Vagina (tissue), 2 donors: ENCODE measurements at regions of chr2 and their contacts with region 1.

Region 1: DNA sequence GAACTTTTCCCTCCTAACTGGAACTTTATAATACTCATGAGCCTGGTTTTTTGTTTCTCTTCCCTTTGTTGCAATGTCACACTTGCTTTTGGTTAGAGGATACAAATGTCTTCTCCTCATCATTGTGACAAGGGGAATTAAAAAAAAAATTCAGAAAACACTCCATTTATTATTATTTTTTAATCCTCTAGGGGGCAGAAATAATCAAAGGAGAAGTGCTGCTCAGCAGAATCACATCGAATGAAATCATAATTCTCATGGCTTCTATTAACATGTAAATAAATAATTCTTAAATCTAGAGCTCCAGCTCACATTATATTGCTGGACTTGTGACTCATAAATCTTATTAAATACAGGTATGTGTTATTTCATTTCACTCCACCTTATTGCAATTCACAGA is 273.8 kb downstream of the TRIB2 start:
- DNase-seq: no peak
- H3K4me3 ChIP-seq: no peak overlapping the region
- H3K27ac ChIP-seq: no peak overlapping the region
- H3K4me1 ChIP-seq: no peaks in the 10 kb centered on the region
- H3K27me3 ChIP-seq: no peaks in the 10 kb centered on the region
- CTCF ChIP-seq: no peak
- POLR2A ChIP-seq: no peak

Region 2: GRCh38 chr2:12402440-12403139 is 587.9 kb before region 1 on chr2:
- intact Hi-C with region 1: loop called (anchors 10 kb)
- DNase-seq: no peak
- H3K4me3 ChIP-seq: no peak overlapping the region
- H3K27ac ChIP-seq: no peak overlapping the region
- H3K4me1 ChIP-seq: no peaks in the 10 kb centered on the region
- H3K27me3 ChIP-seq: no peaks in the 10 kb centered on the region
- CTCF ChIP-seq: no peak
- POLR2A ChIP-seq: no peak

Region 3: DNA sequence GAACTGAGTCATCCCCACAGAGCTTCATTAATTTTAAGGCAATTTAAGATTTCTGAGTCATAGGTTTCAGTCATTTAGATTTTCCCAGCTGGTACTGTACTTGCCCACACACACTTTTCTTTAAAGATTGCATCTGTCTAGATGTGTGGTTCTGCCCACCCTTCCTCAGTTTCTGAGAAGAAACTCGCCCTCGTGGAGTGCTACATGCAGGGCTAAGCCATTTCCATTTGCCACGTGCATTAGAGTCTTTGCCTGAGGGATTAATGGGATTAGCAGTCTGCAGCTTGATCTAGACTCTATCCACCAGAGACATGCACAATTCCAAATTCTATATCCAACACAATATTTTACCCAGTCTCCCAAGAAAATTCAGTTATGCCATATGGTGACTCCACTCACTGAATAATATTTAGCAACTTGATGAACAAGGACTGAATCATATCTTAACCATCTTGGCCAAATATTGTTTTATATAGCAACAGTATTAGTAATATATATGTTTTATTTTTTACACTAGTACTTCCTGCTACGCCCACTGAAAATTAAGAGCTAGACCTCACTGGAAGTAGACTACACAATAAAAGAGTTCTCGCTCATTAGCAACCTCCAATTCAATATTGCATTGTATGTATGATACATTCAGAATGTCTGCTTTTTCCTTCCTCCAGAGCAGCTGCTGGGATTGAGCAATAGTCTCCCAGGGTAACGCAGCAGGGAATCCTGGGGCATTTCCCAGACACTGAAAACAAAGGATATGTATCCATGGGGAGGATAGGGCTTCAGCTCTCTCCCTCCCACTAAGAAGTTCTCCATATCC is 288.0 kb before region 1 on chr2:
- intact Hi-C with region 1: no loop called
- DNase-seq: no peak
- H3K4me3 ChIP-seq: no peak overlapping the region
- H3K27ac ChIP-seq: no peak overlapping the region
- H3K4me1 ChIP-seq: peaks cover 36% of the 10 kb centered on the region
- H3K27me3 ChIP-seq: no peaks in the 10 kb centered on the region
- CTCF ChIP-seq: no peak
- POLR2A ChIP-seq: no peak

Region 4: GRCh38 chr2:12807907-12808810 is 182.4 kb before region 1 on chr2:
- intact Hi-C with region 1: no loop called
- DNase-seq: no peak
- H3K4me3 ChIP-seq: no peak overlapping the region
- H3K27ac ChIP-seq: no peak overlapping the region
- H3K4me1 ChIP-seq: no peaks in the 10 kb centered on the region
- H3K27me3 ChIP-seq: no peaks in the 10 kb centered on the region
- CTCF ChIP-seq: no peak
- POLR2A ChIP-seq: no peak

Region 5: GRCh38 chr2:13091455-13091854 is 100.9 kb after region 1 on chr2:
- intact Hi-C with region 1: no loop called
- DNase-seq: no peak
- H3K4me3 ChIP-seq: no peak overlapping the region
- H3K27ac ChIP-seq: no peak overlapping the region
- H3K4me1 ChIP-seq: no peaks in the 10 kb centered on the region
- H3K27me3 ChIP-seq: no peaks in the 10 kb centered on the region
- CTCF ChIP-seq: no peak
- POLR2A ChIP-seq: no peak